Panc1 (cell line): ENCODE measurements at regions of chr14 and their contacts with region 1.

Region 1: DNA sequence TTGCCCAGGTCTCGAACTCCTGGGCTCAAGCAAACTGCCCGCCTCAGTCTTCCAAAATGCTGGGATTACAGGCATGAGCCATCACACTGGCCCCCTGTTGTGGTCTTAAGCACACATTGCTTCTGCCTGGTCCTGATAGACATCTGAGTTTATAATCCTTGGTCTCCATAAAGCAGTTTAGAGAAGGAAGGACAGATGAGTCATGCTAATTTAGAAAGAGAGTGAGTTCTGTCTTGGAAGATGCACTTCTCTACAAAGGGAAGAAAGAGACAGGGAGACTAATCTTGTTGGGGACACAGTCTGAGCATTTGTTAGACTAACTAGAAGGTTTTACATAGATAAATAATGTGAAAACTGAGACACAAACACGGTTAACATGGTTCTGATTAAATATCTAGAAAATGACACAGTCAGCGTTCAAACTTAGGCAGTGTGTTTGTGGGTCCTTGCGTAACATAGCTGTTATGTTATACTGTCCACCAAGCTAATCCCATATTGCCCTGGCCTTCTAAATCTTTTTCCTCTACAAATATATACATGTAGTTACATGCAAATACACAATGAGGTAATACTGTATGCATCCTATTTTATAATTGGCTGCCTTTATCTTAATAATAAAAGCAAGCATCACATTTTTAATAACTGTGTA is 31.0 kb downstream of the SAMD4A start:
- DNase-seq: no peak
- ATAC-seq: no peak
- H3K4me3 ChIP-seq: no peak overlapping the region
- H3K27ac ChIP-seq: no peak overlapping the region
- H3K4me1 ChIP-seq: no peaks in the 10 kb centered on the region; the same call in 1 of the 2 replicates
- H3K27me3 ChIP-seq: no peaks in the 10 kb centered on the region
- CTCF ChIP-seq: no peak

Region 2: DNA sequence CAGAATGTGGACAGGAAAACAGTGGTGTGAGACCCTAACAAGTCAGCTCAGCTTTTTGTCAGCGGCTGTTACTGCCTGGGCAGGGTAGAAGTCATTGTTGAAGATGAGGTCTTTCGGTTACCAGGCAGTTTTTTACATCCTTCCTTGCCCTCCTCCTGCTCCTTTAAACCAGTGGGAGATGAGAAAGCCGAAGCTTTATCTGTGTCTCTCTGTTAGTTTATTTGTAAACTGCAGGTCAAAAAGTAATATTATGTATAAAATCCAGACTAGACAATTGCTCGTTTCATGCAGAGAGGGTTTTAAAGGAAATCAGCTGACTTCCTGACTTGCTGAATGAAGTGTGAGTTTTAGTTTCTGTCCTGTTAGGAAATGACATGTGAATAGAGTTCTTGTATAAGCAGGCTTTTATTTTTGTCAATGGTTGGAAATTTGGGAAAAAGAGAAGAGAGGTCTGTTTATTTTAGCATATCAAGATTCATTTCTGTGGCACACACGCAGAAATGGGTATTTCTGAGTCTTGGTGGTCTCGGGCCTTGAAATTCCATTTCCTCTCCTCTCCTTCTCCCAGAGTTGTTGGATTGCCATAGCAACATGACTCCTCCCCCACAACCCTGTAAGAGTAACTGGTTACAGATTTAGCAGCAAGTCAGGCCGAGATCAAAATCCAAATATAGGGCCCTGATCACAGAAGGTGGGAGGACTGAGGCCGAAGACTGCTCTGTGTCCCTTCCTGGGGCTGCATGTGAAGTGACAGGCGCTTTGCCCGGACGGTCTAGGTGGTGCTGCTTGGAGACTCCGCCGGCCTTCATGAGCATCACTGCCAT is 29.8 kb after region 1 on chr14:
- CTCF ChIA-PET with region 1: no interaction called
- POLR2A ChIA-PET with region 1: interaction called, 12 read pairs
- in situ Hi-C with region 1: no loop called
- intact Hi-C with region 1: no loop called
- DNase-seq: no peak
- ATAC-seq: no peak
- H3K4me3 ChIP-seq: no peak overlapping the region
- H3K27ac ChIP-seq: no peak overlapping the region
- H3K4me1 ChIP-seq: peaks cover 4% of the 10 kb centered on the region; the same call in 1 of the 2 replicates
- H3K27me3 ChIP-seq: no peaks in the 10 kb centered on the region
- CTCF ChIP-seq: no peak